PC-9 (cell line): ENCODE measurements at regions of chr5 and their contacts with region 1.

Region 1: GRCh38 chr5:30209752-30210151 is 983.7 kb upstream of the CDH6 start:
- DNase-seq: no peak
- H3K4me3 ChIP-seq: no peak overlapping the region
- H3K27ac ChIP-seq: no peak overlapping the region
- H3K4me1 ChIP-seq: no peaks in the 10 kb centered on the region
- H3K27me3 ChIP-seq: no peaks in the 10 kb centered on the region
- CTCF ChIP-seq: no peak

Region 2: GRCh38 chr5:29930316-29930715 is 279.4 kb before region 1 on chr5:
- CTCF ChIA-PET with region 1: no interaction called
- POLR2A ChIA-PET with region 1: no interaction called
- intact Hi-C with region 1: no loop called
- DNase-seq: no peak
- H3K4me3 ChIP-seq: no peak overlapping the region
- H3K27ac ChIP-seq: no peak overlapping the region
- H3K4me1 ChIP-seq: no peaks in the 10 kb centered on the region
- H3K27me3 ChIP-seq: no peaks in the 10 kb centered on the region
- CTCF ChIP-seq: no peak

Region 3: GRCh38 chr5:30030110-30030509 is 179.6 kb before region 1 on chr5:
- CTCF ChIA-PET with region 1: no interaction called
- POLR2A ChIA-PET with region 1: no interaction called
- intact Hi-C with region 1: no loop called
- DNase-seq: no peak
- H3K4me3 ChIP-seq: no peak overlapping the region
- H3K27ac ChIP-seq: no peak overlapping the region
- H3K4me1 ChIP-seq: no peaks in the 10 kb centered on the region
- H3K27me3 ChIP-seq: no peaks in the 10 kb centered on the region
- CTCF ChIP-seq: no peak

Region 4: GRCh38 chr5:30197662-30198061 is 12.1 kb before region 1 on chr5:
- CTCF ChIA-PET with region 1: no interaction called
- POLR2A ChIA-PET with region 1: no interaction called
- intact Hi-C with region 1: loop called (anchors 2 kb)
- DNase-seq: no peak
- H3K4me3 ChIP-seq: no peak overlapping the region
- H3K27ac ChIP-seq: no peak overlapping the region
- H3K4me1 ChIP-seq: no peaks in the 10 kb centered on the region
- H3K27me3 ChIP-seq: no peaks in the 10 kb centered on the region
- CTCF ChIP-seq: no peak

Region 5: GRCh38 chr5:30620481-30621085 is 410.8 kb after region 1 on chr5:
- CTCF ChIA-PET with region 1: no interaction called
- POLR2A ChIA-PET with region 1: no interaction called
- intact Hi-C with region 1: no loop called
- DNase-seq: no peak
- H3K4me3 ChIP-seq: no peak overlapping the region
- H3K27ac ChIP-seq: no peak overlapping the region
- H3K4me1 ChIP-seq: no peaks in the 10 kb centered on the region
- H3K27me3 ChIP-seq: no peaks in the 10 kb centered on the region
- CTCF ChIP-seq: no peak